Endothelial cell of umbilical vein (primary cell): ENCODE measurements at regions of chr11 and their contacts with region 1.

Region 1: DNA sequence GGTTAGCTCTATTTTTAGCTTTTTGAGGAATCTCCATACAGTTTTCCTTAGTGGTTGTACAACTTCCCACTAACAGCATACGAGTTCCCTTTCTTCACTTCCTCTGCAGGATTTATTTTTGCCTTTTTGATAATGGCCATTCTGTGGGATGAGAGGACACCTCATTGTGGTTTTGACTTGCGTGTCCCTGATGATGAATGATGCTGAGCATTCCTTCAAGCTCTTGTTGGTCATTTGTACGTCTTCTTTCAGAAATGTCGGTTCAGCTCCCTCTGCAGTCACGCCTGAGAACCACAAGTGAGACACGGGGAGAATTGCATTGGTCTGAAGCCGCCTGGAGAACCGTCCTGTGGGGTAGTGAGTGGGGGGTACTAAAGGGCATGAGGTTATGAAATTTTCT is 2.0 kb upstream of the KRTAP5-10 start:
- DNase-seq: peak; percentile 48
- H3K4me3 ChIP-seq: no peak overlapping the region
- H3K27ac ChIP-seq: no peak overlapping the region
- H3K4me1 ChIP-seq: no peaks in the 10 kb centered on the region
- H3K27me3 ChIP-seq: peaks cover 0 to 5% of the 10 kb centered on the region in 2 experiments
- CTCF ChIP-seq: peak; percentile 42 to 50
- POLR2A ChIP-seq: no peak

Region 2: GRCh38 chr11:70467201-70468085 is 1096.0 kb before region 1 on chr11:
- CTCF ChIA-PET with region 1: interaction called, 35 read pairs
- POLR2A ChIA-PET with region 1: no interaction called
- dilution Hi-C with region 1: no loop called
- intact Hi-C with region 1: loop called (anchors 1 kb)
- DNase-seq: peak; percentile 51
- H3K4me3 ChIP-seq: no peak overlapping the region
- H3K27ac ChIP-seq: no peak overlapping the region
- H3K4me1 ChIP-seq: no peaks in the 10 kb centered on the region
- H3K27me3 ChIP-seq: no peaks in the 10 kb centered on the region
- CTCF ChIP-seq: peak; percentile 70 to 87
- POLR2A ChIP-seq: no peak

Region 3: GRCh38 chr11:71448257-71449171 is 114.9 kb before region 1 on chr11 and contains the start of gene DHCR7:
- CTCF ChIA-PET with region 1: interaction called, 29 read pairs
- POLR2A ChIA-PET with region 1: no interaction called
- dilution Hi-C with region 1: no loop called
- intact Hi-C with region 1: loop called (anchors 5 kb)
- DNase-seq: peak; percentile 97
- H3K4me3 ChIP-seq: peak within 1 kb of the TSS; percentile 29 to 98 (median 61)
- H3K27ac ChIP-seq: peak within 1 kb of the TSS; percentile 21
- H3K4me1 ChIP-seq: peaks cover 31% of the 10 kb centered on the region
- H3K27me3 ChIP-seq: no peaks in the 10 kb centered on the region
- CTCF ChIP-seq: no peak
- POLR2A ChIP-seq: peak; percentile 65
- total RNA-seq, gene DHCR7: 166 and 171 TPM in 2 replicates

Region 4: GRCh38 chr11:71495286-71496230 is 67.8 kb before region 1 on chr11:
- CTCF ChIA-PET with region 1: interaction called, 11 read pairs
- POLR2A ChIA-PET with region 1: no interaction called
- dilution Hi-C with region 1: no loop called
- intact Hi-C with region 1: no loop called
- DNase-seq: no peak
- H3K4me3 ChIP-seq: no peak overlapping the region
- H3K27ac ChIP-seq: no peak overlapping the region
- H3K4me1 ChIP-seq: no peaks in the 10 kb centered on the region
- H3K27me3 ChIP-seq: no peaks in the 10 kb centered on the region
- CTCF ChIP-seq: no peak
- POLR2A ChIP-seq: no peak

Region 5: GRCh38 chr11:71543866-71544265 is 19.5 kb before region 1 on chr11:
- CTCF ChIA-PET with region 1: interaction called, 12 read pairs
- POLR2A ChIA-PET with region 1: no interaction called
- dilution Hi-C with region 1: no loop called
- intact Hi-C with region 1: no loop called
- DNase-seq: no peak
- H3K4me3 ChIP-seq: no peak overlapping the region
- H3K27ac ChIP-seq: no peak overlapping the region
- H3K4me1 ChIP-seq: no peaks in the 10 kb centered on the region
- H3K27me3 ChIP-seq: no peaks in the 10 kb centered on the region
- CTCF ChIP-seq: no peak
- POLR2A ChIP-seq: no peak

Region 6: GRCh38 chr11:71574418-71574817 is 11.0 kb after region 1 on chr11:
- CTCF ChIA-PET with region 1: interaction called, 15 read pairs
- POLR2A ChIA-PET with region 1: no interaction called
- dilution Hi-C with region 1: no loop called
- intact Hi-C with region 1: no loop called
- DNase-seq: no peak
- H3K4me3 ChIP-seq: no peak overlapping the region
- H3K27ac ChIP-seq: no peak overlapping the region
- H3K4me1 ChIP-seq: no peaks in the 10 kb centered on the region
- H3K27me3 ChIP-seq: peaks cover 0 to 2% of the 10 kb centered on the region in 2 experiments
- CTCF ChIP-seq: no peak
- POLR2A ChIP-seq: no peak

Region 7: GRCh38 chr11:71580057-71581003 is 16.9 kb after region 1 on chr11:
- CTCF ChIA-PET with region 1: interaction called, 28 read pairs
- POLR2A ChIA-PET with region 1: no interaction called
- dilution Hi-C with region 1: no loop called
- intact Hi-C with region 1: no loop called
- DNase-seq: peak; percentile 63
- H3K4me3 ChIP-seq: no peak overlapping the region
- H3K27ac ChIP-seq: no peak overlapping the region
- H3K4me1 ChIP-seq: no peaks in the 10 kb centered on the region
- H3K27me3 ChIP-seq: peaks cover 0 to 2% of the 10 kb centered on the region in 2 experiments
- CTCF ChIP-seq: peak; percentile 76 to 86
- POLR2A ChIP-seq: no peak